Cardiac septum (tissue), 1 donor: ENCODE measurements at regions of chr18 and their contacts with region 1.

Region 1: DNA sequence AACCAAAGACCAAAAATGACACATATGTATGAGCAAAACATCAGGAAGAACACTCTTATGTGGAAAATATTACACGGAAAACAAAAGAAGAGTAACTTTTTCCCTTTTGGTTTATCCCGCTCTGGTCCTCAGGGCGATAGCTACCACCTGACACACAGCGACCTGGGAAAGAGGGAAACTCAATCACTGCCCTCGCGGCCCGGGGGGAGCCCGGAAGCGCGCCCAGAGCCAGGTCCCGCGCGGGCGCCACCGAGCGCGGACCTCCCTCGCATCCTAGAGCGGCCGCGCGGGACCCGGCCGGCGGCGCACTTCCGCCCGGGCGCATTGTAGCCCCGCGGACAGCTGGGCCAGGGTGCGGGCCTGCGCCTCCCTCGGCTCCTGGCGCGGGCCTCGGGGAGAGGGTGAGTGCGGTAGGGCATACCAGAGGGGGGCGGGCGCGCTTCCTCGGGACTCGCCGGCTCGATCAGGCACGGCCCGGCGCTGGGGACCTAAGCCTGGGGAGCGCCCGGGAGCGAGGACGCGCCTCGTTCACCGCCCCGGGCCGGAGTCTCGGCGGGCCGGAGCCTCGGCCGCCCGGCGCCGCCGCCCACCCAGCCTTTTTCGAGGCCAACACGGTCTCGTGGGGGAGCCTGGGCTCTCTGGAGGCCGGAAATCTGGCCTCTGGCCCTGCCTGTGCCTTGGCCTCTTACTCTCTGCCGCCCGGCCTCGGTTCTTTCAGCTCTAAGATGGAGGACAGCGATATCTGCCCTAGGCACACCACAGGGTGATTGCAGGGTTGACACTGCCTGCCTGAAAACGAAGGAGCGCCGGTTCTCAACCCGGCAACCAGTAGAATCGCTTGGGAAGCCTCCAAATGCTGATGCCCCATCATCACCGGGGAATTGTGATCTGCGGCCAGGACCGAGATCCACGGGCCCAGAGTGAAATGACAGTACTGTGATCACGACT is at the start of gene ELAC1:
- DNase-seq: peak; percentile 88
- total RNA-seq, gene ELAC1: 4.5 TPM

Region 2: GRCh38 chr18:51009072-51009471 is 41.1 kb after region 1 on chr18:
- intact Hi-C with region 1: no loop called
- DNase-seq: no peak

Region 3: DNA sequence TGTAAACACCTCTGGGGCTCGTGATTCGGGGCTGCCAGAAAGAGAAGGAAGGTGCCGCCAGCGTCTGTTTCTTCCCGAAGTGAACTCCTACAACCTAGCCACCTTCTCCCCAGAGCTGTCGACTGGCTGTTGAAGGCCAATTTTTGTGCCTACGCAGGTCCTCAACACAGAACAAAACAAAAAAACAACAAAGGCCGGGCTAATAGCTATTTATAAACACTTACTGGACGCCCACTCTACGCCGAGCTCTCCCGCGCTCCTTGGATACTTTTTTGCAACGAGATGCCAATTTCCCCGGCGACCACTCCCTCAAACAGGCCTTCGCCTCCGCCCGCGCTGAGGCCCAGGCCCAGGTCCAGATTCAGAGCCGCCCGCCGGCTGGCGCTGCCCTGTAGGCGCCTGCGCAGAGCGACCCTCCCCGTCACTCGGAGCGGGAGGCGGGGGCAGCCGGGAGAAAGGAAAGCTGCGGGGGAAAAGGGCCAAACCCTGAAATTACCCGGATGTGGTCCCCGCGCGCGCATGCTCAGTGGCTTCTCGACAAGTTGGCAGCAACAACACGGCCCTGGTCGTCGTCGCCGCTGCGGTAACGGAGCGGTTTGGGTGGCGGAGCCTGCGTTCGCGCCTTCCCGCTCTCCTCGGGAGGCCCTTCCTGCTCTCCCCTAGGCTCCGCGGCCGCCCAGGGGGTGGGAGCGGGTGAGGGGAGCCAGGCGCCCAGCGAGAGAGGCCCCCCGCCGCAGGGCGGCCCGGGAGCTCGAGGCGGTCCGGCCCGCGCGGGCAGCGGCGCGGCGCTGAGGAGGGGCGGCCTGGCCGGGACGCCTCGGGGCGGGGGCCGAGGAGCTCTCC is 61.9 kb after region 1 on chr18 and contains the start of gene SMAD4:
- intact Hi-C with region 1: loop called (anchors 1 kb)
- DNase-seq: peak; percentile 99
- total RNA-seq, gene SMAD4: 88.7 TPM